ENCODE measurements at regions of chr12 and their contacts with region 1.

Region 1: GRCh38 chr12:110698171-110698902 is 9.4 kb upstream of the HVCN1 start:
- DNase-seq: peak in 1 of 2 donors; percentile 91
- H3K4me3 ChIP-seq: peak overlapping the region; percentile 8 to 35
- H3K27ac ChIP-seq: no peak overlapping the region
- H3K4me1 ChIP-seq: peaks cover 11% of the 10 kb centered on the region
- H3K27me3 ChIP-seq: no peaks in the 10 kb centered on the region
- CTCF ChIP-seq: peak; percentile 33 to 58 (median 43)
- POLR2A ChIP-seq: no peak

Region 2: DNA sequence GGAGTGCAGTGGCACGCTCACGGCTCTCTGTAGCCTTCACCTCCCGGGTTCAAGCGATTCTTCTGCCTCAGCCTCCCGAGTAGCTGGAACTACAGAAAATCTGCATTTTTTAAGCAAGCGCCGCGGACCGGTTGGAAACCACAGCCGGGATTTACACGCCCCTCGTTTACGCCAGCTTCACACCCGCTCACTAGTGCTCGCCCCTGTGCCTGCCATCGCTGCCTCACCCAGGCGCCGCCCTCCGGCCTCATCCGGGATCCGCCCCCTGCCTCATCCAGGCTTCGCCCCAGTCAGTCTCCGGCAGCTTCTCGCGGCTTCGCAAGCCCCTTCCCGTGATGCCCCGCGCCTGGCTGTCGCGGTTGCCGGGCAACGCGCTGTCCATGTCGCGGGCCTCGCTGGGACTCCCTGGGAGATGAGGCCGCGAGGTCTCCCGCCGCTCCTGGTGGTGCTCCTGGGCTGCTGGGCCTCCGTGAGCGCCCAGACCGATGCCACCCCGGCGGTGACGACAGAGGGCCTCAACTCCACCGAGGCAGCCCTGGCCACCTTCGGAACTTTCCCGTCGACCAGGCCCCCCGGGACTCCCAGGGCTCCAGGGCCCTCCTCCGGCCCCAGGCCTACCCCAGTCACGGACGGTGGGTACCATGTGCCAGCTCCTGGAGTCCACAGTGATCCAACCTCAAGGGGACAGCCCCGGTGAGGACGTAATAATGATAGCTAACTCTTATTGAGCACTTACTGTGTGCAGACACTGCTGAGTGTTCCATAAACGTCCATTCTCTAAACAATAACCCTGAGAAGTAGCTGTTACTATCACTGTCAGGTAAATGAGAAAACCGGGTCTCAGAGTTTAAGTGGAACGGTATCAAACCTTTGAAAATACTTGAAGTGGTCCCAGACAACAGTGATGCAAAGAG is 84.3 kb before region 1 on chr12 and contains the start of gene TCTN1:
- intact Hi-C with region 1: loop called (anchors 10 kb)
- DNase-seq: peak; percentile 96 to 98
- H3K4me3 ChIP-seq: peak within 1 kb of the TSS; percentile 70 to 71
- H3K27ac ChIP-seq: peak within 1 kb of the TSS; percentile 71
- H3K4me1 ChIP-seq: peaks cover 16% of the 10 kb centered on the region
- H3K27me3 ChIP-seq: no peaks in the 10 kb centered on the region
- CTCF ChIP-seq: no peak
- POLR2A ChIP-seq: peak; percentile 51 to 61
- total RNA-seq, gene TCTN1: 31.4 TPM

Measured in vagina (tissue), 2 donors.